ENCODE measurements at regions of chrX and their contacts with region 1.

Region 1: DNA sequence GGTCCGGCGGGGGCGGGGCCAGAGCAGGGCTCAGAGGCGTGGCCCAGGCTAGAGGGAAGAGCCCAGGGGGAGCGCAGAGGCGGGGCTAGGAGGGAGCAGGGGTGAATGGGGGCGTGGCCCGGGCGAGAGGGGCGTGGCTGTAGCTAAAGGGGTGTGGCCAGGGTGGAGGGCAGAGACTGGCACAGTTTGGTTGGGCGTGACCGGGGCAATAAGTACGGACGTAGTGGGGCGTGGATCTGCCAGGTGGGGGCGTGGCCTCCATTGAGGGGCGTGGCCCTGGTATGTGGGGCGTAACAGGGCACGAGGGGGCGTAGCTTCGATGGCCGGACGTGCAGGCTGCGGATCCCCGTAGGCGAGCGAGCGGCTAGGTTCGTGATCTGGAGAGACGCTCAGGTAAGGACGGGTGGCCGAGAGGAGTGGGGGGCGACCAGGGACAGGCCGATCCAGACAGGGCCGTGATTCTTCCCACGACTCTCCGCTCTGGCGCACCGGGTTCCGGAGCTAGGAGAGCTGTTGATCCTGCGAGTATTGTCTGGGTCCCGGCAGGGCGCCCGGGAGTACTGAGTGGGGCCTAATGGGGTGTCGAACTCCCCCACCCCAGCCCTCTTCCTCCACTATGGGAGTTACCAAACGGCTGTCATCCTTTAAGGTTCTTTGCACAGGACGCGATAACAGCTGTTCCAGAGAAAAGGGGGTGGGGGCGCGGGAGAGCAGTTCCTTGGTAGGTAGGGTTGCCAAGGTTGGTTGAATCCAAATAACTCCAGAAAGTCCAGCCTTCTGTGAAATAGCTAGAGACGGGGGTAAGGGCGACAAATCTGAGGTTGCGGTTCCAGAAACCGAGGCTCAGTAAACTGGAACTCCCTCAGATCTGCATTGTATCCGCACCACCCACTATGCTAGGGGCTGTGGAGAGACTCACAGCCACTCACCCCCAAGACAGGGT is at the start of gene CA5B:
- DNase-seq: peak; percentile 97
- H3K4me3 Mint-ChIP-seq: peak within 1 kb of the TSS; percentile 87
- H3K27ac Mint-ChIP-seq: peak within 1 kb of the TSS; percentile 74
- H3K4me1 Mint-ChIP-seq: peaks cover 33% of the 10 kb centered on the region
- H3K27me3 Mint-ChIP-seq: no peaks in the 10 kb centered on the region
- total RNA-seq, gene CA5B: 26.1 to 31.7 TPM

Region 2: DNA sequence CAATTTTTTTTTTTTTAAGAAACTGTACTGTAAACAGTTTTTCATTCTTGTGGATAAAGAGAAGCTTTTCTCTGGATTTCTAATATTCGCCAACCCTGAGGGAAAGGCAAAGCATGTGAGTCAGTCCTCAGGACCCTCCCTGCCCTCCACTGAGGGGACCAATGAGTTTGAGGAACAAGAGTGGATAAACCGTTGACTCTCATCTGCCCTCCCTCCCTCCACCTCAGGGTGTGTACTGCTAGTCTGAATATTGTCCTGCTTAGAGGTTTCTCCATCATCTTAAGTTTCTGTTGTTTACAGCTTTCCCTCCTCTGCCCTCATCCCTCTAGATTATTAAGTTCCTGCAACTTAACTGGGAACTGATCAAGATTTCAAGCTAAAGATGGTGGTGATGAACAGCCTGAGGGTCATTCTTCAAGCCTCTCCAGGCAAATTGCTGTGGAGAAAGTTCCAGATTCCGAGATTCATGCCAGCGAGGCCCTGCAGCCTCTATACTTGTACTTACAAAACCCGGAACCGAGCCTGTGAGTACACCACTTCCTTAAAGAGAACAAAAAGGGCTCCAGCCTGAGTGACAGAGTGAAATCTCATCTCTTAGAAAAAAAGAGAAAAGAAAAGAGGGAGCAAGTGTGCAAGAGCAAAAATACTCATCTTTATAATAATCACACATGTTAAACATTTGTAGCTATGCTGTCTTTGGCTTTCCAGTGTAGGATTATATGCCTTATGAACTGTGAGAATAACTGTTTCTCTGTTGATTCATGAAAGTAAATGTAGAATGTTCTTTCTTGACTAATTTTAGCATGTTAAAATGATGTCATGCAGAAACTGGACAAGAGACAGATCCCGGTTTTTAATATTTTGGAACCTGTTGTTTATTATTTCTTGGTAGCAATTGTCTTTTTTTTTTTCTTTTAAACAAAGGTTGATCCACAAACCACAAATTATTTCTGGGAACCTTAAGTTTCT is 11.7 kb after region 1 on chrX:
- CTCF ChIA-PET with region 1: interaction called, 26 read pairs
- POLR2A ChIA-PET with region 1: interaction called, 228 read pairs
- DNase-seq: peak; percentile 39
- H3K4me3 Mint-ChIP-seq: peak overlapping the region; percentile 66
- H3K27ac Mint-ChIP-seq: peak overlapping the region; percentile 99
- H3K4me1 Mint-ChIP-seq: peaks cover 68% of the 10 kb centered on the region
- H3K27me3 Mint-ChIP-seq: no peaks in the 10 kb centered on the region

Region 3: GRCh38 chrX:15758140-15758539 is 19.9 kb after region 1 on chrX:
- CTCF ChIA-PET with region 1: interaction called, 17 read pairs
- POLR2A ChIA-PET with region 1: interaction called, 228 read pairs
- DNase-seq: no peak
- H3K4me3 Mint-ChIP-seq: no peak overlapping the region
- H3K27ac Mint-ChIP-seq: peak overlapping the region; percentile 65
- H3K4me1 Mint-ChIP-seq: peaks cover 53% of the 10 kb centered on the region
- H3K27me3 Mint-ChIP-seq: no peaks in the 10 kb centered on the region

Region 4: DNA sequence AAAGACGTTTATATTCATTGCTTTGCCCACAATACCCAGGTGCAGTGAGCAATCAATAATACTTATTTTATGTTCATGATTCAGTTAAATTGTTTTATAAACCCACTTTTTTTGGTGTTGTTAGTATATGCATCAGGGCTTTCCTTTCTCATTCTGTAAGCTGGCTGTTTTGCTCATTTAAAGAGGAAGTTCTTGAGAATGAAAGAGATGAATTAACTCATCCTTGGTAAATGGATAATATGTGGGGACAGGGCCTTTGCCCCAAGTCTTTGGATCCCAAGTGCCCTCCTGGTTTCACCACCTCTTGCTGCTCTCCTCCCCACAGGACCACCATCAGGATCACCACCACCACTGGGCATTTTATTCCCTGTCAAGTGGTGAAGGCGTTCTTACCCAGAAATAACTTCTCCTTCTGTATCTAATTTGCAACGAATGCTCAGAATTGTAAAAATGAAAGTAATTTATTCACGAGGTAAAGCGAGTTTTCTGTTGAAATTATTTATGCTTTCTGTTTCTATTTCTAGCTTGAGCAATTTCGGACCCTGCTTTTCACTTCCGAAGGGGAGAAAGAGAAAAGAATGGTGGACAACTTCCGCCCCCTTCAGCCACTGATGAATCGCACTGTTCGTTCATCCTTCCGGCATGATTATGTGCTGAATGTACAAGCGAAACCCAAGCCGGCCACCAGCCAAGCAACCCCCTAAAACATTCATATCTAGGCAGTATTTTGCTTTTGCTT is 43.9 kb after region 1 on chrX:
- CTCF ChIA-PET with region 1: interaction called, 5 read pairs
- POLR2A ChIA-PET with region 1: interaction called, 17 read pairs
- DNase-seq: peak; percentile 43
- H3K4me3 Mint-ChIP-seq: peak overlapping the region; percentile 81
- H3K27ac Mint-ChIP-seq: peak overlapping the region; percentile 99
- H3K4me1 Mint-ChIP-seq: peaks cover 14% of the 10 kb centered on the region
- H3K27me3 Mint-ChIP-seq: no peaks in the 10 kb centered on the region

Region 5: GRCh38 chrX:15854712-15855567 is 116.7 kb after region 1 on chrX and contains the start of gene AP1S2:
- CTCF ChIA-PET with region 1: interaction called, 4 read pairs
- POLR2A ChIA-PET with region 1: interaction called, 20 read pairs
- DNase-seq: peak; percentile 92
- H3K4me3 Mint-ChIP-seq: peak within 1 kb of the TSS; percentile 87
- H3K27ac Mint-ChIP-seq: peak within 1 kb of the TSS; percentile 85
- H3K4me1 Mint-ChIP-seq: peaks cover 22% of the 10 kb centered on the region
- H3K27me3 Mint-ChIP-seq: no peaks in the 10 kb centered on the region
- total RNA-seq, gene AP1S2: 29.5 to 34.3 TPM

Region 6: DNA sequence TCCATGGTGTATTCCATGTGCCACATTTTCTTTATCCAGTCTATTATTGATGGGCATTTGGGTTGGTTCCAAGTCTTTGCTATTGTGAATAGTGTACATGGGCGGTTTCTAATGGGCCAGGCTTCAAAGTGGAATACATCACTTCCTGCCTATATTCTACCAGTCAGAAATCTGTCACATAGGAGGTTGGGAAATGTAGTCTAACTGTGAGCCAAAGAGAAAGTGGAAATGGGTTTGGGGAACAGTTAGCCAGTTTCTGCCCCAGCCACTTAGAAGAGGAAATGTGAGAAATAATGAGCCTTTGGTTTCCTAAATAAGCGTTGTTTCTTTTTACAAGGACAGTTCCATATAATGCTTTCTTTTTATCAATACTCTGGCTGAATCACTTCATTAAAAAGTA is 201.5 kb after region 1 on chrX:
- CTCF ChIA-PET with region 1: no interaction called
- POLR2A ChIA-PET with region 1: no interaction called
- DNase-seq: no peak
- H3K4me3 Mint-ChIP-seq: no peak overlapping the region
- H3K27ac Mint-ChIP-seq: no peak overlapping the region
- H3K4me1 Mint-ChIP-seq: peaks cover 3% of the 10 kb centered on the region
- H3K27me3 Mint-ChIP-seq: peaks cover 3% of the 10 kb centered on the region

Measured in activated CD4-positive, alpha-beta memory T cell treated with anti-CD3 and anti-CD28 coated beads, Interleukin-2, amount 10 ng/mL, durations not matched to agents 7 days and 5 days (primary cell).